Ascending aorta (tissue), 2 donors: ENCODE measurements at regions of chr6 and their contacts with region 1.

Region 1: GRCh38 chr6:73461537-73462350 is at the start of gene MTO1:
- DNase-seq: peak; percentile 69 to 95
- H3K4me3 ChIP-seq: peak within 1 kb of the TSS; percentile 82 to 96
- H3K27ac ChIP-seq: peak within 1 kb of the TSS; percentile 90 to 95
- H3K4me1 ChIP-seq: peaks cover 0 to 13% of the 10 kb centered on the region in 2 donors
- H3K27me3 ChIP-seq: no peaks in the 10 kb centered on the region
- CTCF ChIP-seq: no peak
- total RNA-seq, gene MTO1: 12.5 TPM

Region 2: GRCh38 chr6:73388433-73388799 is 73.3 kb before region 1 on chr6:
- intact Hi-C with region 1: no loop called
- DNase-seq: no peak
- H3K4me3 ChIP-seq: peak overlapping the region; percentile 58 to 66
- H3K27ac ChIP-seq: peak overlapping the region; percentile 58 to 78
- H3K4me1 ChIP-seq: no peaks in the 10 kb centered on the region
- H3K27me3 ChIP-seq: no peaks in the 10 kb centered on the region
- CTCF ChIP-seq: no peak

Region 3: DNA sequence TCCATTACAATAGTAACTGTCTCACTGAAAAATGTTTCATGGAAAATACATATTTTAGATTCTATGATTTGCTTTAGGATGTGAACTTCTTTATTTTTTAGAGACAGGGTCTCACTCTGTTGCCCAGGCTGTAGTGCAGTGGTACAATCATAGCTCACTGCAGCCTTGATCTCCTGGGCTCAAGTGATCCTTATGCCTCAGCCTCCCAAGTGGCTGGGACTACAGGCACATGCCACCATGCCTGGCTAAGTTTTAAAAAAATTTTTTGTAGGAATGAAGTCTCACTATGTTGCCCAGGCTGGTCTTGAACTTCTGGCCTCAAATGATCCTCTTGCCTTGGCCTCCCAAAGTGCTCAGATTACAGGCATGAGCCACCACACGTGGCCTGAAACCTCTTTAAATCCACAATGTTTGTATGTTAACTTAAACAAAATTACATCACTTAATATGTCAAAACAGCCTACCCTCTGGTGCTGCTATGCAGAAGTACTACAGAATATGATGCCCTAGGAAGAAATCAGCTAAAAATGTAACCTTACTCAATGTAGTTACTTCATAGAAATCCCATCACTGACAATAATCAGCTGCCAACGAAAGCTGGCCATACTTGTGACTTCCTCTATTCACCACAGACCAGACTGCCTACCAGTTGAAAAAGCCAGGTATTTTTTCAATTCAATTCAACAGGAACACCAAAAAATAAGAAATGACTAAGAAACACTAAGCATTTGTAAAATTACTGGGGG is 41.5 kb after region 1 on chr6:
- intact Hi-C with region 1: no loop called
- DNase-seq: no peak
- H3K4me3 ChIP-seq: no peak overlapping the region
- H3K27ac ChIP-seq: no peak overlapping the region
- H3K4me1 ChIP-seq: no peaks in the 10 kb centered on the region
- H3K27me3 ChIP-seq: no peaks in the 10 kb centered on the region
- CTCF ChIP-seq: no peak

Region 4: DNA sequence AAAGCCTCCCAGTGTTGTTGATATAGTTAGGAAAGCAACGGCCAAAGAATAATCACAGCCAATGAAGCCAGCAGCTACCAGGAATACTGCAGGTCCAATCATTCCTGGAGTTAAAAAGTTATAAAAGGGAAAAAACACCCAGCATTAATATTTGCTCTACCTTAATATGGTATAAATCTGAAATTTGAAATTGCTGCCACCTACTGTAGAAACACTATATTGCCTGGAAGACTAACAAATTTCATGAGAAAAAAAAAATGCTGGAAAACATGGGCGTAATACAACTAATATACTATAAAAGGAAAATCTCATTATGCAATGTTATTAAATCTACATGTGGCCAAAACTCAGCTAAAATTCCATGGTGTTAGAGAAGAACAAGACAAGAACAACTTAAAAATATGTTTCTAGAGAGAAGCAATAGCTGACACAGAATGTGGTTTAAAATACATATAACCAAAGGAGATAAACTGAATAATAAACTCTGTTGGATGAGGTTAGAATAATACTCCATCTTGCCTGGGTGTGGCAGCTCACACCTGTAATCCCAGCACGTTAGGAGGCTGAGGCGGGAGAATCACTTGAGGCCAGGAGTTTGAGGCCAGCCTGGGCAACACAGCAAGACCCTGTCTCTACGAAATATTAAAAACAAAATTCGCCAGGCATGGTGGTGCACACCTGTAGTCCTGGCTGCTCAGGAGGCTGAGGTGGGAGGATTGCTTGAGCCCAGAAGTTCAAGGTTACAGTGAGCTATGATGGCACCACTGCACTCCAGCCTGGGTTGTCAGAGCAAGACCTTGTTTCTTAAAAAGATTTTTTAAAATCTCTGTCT is 148.9 kb after region 1 on chr6:
- intact Hi-C with region 1: loop called (anchors 5 kb)
- DNase-seq: no peak
- H3K4me3 ChIP-seq: no peak overlapping the region
- H3K27ac ChIP-seq: peak overlapping the region in 1 of 2 donors; percentile 27
- H3K4me1 ChIP-seq: peaks cover 0 to 3% of the 10 kb centered on the region in 2 donors
- H3K27me3 ChIP-seq: no peaks in the 10 kb centered on the region
- CTCF ChIP-seq: peak; percentile 60 to 72 (median 65)